HEK293 (cell line): ENCODE measurements at regions of chr13 and their contacts with region 1.

Region 1: GRCh38 chr13:45340422-45340925 is 509 bp downstream of the TPT1 start:
- H3K4me3 ChIP-seq: peak overlapping the region; percentile 80
- H3K27ac ChIP-seq: peak overlapping the region; percentile 91
- H3K4me1 ChIP-seq: peaks cover 12% of the 10 kb centered on the region
- CTCF ChIP-seq: no peak

Region 2: DNA sequence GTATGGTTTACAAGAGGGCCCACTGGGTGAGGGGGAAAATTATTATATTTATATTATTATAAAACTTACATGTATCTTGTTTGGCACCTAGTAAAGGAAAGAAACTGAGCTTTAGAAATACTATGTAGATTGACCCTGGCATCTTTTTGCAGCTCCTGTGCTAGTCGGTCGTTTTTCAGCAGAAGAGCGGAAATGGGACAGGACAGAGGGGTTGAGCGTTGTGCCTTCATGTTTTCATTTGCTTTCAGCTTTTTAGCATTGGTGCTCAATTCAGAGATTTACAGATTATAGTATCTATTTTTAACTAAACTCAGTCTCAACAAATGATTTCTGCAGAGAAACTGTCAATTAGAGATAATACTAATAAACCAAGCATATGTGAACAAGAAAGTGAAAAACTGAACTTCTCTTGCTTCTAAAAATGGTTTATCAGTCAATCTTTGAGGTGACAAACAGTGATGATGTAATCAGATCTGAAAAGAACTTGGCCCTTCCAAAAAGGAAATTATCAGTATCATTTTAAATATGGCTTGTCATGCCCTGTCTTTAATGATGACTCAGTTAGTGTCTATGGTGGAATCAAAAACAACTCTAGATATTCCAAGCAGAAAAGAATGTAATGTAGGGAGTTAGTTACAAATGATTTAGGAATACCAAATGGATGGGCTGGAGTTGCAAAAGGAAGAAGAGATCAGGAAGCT is 82.7 kb before region 1 on chr13:
- CTCF ChIA-PET with region 1: no interaction called
- POLR2A ChIA-PET with region 1: no interaction called
- H3K4me3 ChIP-seq: no peak overlapping the region
- H3K27ac ChIP-seq: no peak overlapping the region
- H3K4me1 ChIP-seq: peaks cover 7% of the 10 kb centered on the region; the same call in 1 of the 2 replicates
- CTCF ChIP-seq: no peak

Region 3: DNA sequence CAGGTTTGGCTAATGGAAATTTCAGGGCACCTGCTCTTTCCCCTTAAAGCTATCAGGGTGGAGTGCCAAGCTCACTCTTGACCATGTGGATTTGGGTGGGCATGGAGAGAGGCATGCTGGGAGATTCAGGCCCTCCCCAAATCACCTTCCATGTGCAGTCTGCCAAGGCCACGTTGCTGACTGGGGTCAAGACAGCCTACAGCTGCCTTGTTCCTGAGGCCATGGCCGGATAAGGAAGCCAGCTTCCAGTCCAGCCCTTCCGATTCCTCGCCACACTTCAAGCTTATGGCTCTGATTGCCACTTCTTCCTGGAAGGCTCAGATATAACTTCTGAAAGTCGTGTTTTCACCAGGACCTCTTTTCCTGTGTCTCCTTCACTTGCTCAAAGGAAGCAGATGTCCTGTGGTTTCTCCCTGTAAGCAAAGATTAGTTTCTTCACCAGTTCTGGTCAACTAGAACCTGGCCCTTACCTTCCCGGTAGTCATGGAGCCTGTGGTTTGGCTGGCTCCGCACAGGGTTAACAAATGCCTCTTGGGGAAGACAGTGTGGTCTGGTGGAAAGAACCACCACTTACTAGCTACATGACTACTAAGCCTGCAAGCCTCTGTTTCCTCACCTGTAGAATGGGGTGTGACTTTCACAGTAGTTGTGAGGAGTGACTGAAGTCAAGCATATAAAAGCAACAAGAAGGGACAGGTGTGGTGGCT is 16.6 kb after region 1 on chr13:
- CTCF ChIA-PET with region 1: interaction called, 4 read pairs
- POLR2A ChIA-PET with region 1: interaction called, 18 read pairs
- H3K4me3 ChIP-seq: no peak overlapping the region
- H3K27ac ChIP-seq: no peak overlapping the region
- H3K4me1 ChIP-seq: no peaks in the 10 kb centered on the region
- CTCF ChIP-seq: no peak